Activated B cell treated with CpG ODN at 0.5 μM for 24 hours (primary cell): ENCODE measurements at regions of chr12 and their contacts with region 1.

Region 1: GRCh38 chr12:7219599-7220243 is 30.2 kb downstream of the PEX5 start:
- DNase-seq: peak; percentile 24
- ATAC-seq: peak; percentile 64
- H3K4me3 Mint-ChIP-seq: no peak overlapping the region
- H3K27ac Mint-ChIP-seq: no peak overlapping the region
- H3K4me1 Mint-ChIP-seq: no peaks in the 10 kb centered on the region
- H3K27me3 Mint-ChIP-seq: no peaks in the 10 kb centered on the region
- CTCF ChIP-seq: peak; percentile 90

Region 2: DNA sequence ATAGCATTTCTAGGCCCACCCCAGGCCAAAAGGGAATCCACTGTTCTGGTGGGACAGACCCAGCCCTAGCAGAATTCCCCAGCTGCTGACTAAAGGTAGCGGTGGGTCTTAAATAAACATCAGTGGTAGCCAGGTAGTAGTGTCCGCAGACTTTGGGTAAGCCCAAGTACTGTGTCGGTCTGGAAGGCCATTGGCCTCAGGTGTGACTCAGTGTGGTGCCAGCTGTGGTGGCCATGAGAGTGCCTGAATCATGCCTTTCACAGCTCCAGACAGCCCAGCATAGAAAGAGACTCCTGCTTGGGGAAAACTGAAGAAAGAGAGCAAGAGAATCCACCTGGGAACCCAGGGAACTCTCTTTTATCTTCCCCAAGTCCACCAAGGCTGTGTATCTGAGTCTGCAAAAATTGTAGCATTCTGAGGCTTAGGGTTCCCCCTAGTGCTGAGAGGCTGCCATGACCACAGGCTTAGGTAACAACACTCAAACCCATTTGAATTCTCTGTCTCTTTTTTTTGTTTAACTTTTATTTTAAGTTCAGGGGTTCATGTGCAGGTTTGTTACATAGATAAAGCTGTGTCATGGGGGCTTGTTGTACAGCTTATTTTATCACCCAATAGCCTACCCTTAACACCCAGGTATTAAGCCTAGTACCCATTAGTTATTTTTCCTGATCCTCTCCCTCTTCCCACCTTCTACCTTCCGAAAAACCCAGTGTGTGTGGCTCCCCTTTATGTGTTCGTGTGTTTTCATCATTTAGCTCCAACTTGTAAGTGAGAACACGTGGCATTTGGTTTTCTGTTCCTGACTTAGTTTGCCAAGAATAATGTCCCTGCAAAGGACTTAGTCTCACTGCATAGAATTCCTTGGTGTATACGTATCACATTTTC is 240.9 kb after region 1 on chr12:
- CTCF ChIA-PET with region 1: no interaction called
- POLR2A ChIA-PET with region 1: no interaction called
- intact Hi-C with region 1: loop called (anchors 1 kb)
- DNase-seq: no peak
- ATAC-seq: no peak
- H3K4me3 Mint-ChIP-seq: no peak overlapping the region
- H3K27ac Mint-ChIP-seq: no peak overlapping the region
- H3K4me1 Mint-ChIP-seq: no peaks in the 10 kb centered on the region
- H3K27me3 Mint-ChIP-seq: peaks cover 5% of the 10 kb centered on the region
- CTCF ChIP-seq: no peak

Region 3: DNA sequence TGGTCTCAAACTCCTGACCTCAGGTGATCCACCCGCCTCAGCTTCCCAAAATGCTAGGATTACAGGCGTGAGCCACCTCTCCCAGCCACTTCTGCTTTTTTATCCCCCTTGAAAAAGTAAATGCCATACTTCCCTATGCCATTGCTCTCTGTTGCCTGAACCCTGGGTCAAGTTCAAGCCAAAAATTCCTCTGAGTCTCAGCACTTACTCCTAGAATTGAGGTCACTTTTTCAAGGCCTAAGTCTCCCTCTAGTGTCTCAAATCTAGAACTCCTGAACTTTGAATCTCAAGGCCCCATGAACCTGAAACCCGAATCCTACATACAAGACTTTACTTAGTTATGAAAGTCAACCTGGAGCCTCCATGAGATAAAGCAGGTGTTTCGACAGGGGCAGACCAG is 447.4 kb after region 1 on chr12:
- CTCF ChIA-PET with region 1: no interaction called
- POLR2A ChIA-PET with region 1: no interaction called
- intact Hi-C with region 1: no loop called
- DNase-seq: no peak
- ATAC-seq: no peak
- H3K4me3 Mint-ChIP-seq: no peak overlapping the region
- H3K27ac Mint-ChIP-seq: no peak overlapping the region
- H3K4me1 Mint-ChIP-seq: no peaks in the 10 kb centered on the region
- H3K27me3 Mint-ChIP-seq: no peaks in the 10 kb centered on the region
- CTCF ChIP-seq: no peak